ENCODE measurements at regions of chr11 and their contacts with region 1.

Region 1: DNA sequence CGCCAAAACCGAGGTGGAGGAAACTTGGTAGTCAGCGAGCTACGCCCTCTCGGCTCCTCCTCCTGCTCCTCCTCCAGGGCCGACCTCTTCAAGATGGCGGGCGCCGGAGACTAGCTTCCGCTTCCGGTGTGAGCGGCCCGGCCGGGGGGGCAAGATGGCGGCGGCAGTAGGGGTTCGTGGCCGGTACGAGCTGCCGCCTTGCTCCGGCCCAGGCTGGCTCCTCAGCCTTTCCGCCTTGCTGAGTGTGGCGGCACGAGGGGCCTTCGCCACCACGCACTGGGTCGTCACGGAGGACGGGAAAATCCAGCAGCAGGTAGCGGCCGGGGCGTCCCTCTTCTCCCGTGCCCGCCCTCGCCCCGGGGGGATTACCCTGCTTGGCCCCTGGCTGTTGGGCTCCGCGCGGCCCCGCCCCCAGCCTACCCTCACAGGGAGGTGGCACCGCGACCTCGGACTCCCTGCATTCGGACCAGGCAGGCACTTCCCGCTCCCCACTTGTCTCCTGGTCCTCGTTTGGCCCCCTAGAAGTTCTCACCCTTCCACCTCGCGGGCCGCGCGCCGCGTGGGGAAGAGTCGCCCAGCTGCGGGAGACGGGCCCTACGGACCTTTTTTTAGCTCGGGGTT is at the start of gene TTC17:
- DNase-seq: peak in 1 of 2 donors; percentile 93
- H3K4me3 ChIP-seq: peak within 1 kb of the TSS; percentile 87
- H3K27ac ChIP-seq: peak within 1 kb of the TSS; percentile 82
- H3K4me1 ChIP-seq: peaks cover 31% of the 10 kb centered on the region
- H3K27me3 ChIP-seq: no peaks in the 10 kb centered on the region
- CTCF ChIP-seq: no peak
- POLR2A ChIP-seq: peak in 1 of 2 donors; percentile 59
- total RNA-seq, gene TTC17: 89.9 TPM

Region 2: DNA sequence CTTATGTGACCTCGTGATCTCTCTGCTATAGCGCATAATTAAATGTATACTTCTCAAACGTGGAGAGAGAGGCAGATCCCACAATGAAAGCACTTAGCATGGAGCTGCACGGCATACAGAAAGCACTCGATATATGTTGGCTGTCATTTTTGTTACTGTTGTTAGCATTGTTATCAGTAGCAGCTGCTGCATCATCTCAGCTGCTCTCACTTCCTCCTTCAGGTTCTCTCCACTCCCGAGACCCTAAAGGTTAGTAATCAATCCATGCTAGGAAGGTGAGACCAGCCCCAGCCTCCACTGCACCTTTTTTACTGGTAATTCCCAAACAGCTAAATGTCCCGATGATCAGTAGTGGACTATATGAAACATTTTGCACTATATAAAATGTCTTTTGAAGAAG is 60.5 kb before region 1 on chr11:
- intact Hi-C with region 1: no loop called
- DNase-seq: no peak
- H3K4me3 ChIP-seq: no peak overlapping the region
- H3K27ac ChIP-seq: no peak overlapping the region
- H3K4me1 ChIP-seq: no peaks in the 10 kb centered on the region
- H3K27me3 ChIP-seq: no peaks in the 10 kb centered on the region
- CTCF ChIP-seq: no peak
- POLR2A ChIP-seq: no peak

Region 3: GRCh38 chr11:43311791-43312607 is 46.9 kb before region 1 on chr11 and contains the start of gene API5:
- intact Hi-C with region 1: loop called (anchors 5 kb)
- DNase-seq: peak in 1 of 2 donors; percentile 92
- H3K4me3 ChIP-seq: peak within 1 kb of the TSS; percentile 65 to 66
- H3K27ac ChIP-seq: peak within 1 kb of the TSS; percentile 76
- H3K4me1 ChIP-seq: peaks cover 41% of the 10 kb centered on the region
- H3K27me3 ChIP-seq: no peaks in the 10 kb centered on the region
- CTCF ChIP-seq: peak; percentile 35 to 89 (median 63)
- POLR2A ChIP-seq: no peak
- total RNA-seq, gene API5: 66.5 TPM

Measured in vagina (tissue), 2 donors.